Activated B cell treated with CpG ODN at 0.5 μM for 24 hours (primary cell): ENCODE measurements at regions of chr7 and their contacts with region 1.

Region 1: DNA sequence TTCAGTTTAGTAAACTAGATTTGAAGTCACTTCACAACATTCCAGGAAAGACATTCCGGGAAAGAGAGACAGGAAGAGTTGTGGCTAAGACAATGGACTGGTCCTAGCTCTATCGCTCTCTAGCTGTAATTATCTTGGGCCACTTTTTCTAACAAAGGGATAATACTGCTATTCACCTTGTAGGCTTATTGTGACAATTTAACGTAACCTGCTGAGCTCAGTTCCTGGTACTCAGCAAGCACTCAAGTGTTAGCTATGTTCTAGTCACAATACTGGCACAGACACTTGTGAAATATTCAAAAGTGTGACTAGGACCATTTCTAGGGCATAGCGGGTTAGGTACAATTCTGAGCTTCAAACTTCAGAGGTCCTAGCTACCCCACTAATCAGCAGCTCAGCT is 12.0 kb upstream of the NRCAM start:
- DNase-seq: no peak
- ATAC-seq: no peak
- H3K4me3 Mint-ChIP-seq: no peak overlapping the region
- H3K27ac Mint-ChIP-seq: no peak overlapping the region
- H3K4me1 Mint-ChIP-seq: peaks cover 11% of the 10 kb centered on the region
- H3K27me3 Mint-ChIP-seq: peaks cover 24% of the 10 kb centered on the region
- CTCF ChIP-seq: no peak

Region 2: GRCh38 chr7:108452722-108453121 is 15.5 kb before region 1 on chr7:
- CTCF ChIA-PET with region 1: interaction called, 8 read pairs
- POLR2A ChIA-PET with region 1: interaction called, 14 read pairs
- intact Hi-C with region 1: loop called (anchors 2 kb)
- DNase-seq: no peak
- ATAC-seq: peak; percentile 56
- H3K4me3 Mint-ChIP-seq: no peak overlapping the region
- H3K27ac Mint-ChIP-seq: no peak overlapping the region
- H3K4me1 Mint-ChIP-seq: peaks cover 26% of the 10 kb centered on the region
- H3K27me3 Mint-ChIP-seq: peaks cover 40% of the 10 kb centered on the region
- CTCF ChIP-seq: no peak

Region 3: GRCh38 chr7:108486291-108486966 is 18.2 kb after region 1 on chr7:
- CTCF ChIA-PET with region 1: no interaction called
- POLR2A ChIA-PET with region 1: no interaction called
- intact Hi-C with region 1: loop called (anchors 2 kb)
- DNase-seq: no peak
- ATAC-seq: no peak
- H3K4me3 Mint-ChIP-seq: no peak overlapping the region
- H3K27ac Mint-ChIP-seq: no peak overlapping the region
- H3K4me1 Mint-ChIP-seq: peaks cover 9% of the 10 kb centered on the region
- H3K27me3 Mint-ChIP-seq: no peaks in the 10 kb centered on the region
- CTCF ChIP-seq: no peak